GM12878 (cell line): ENCODE measurements at regions of chr3 and their contacts with region 1.

Region 1: GRCh38 chr3:53195602-53196574 is 34.9 kb downstream of the PRKCD start:
- DNase-seq: no peak
- ATAC-seq: peak; percentile 77
- H3K4me3 ChIP-seq: no peak overlapping the region; the same call in 1 of the 2 replicates
- H3K27ac ChIP-seq: peak overlapping the region; percentile 85
- H3K4me1 ChIP-seq: peaks cover 43% of the 10 kb centered on the region
- H3K27me3 ChIP-seq: no peaks in the 10 kb centered on the region
- CTCF ChIP-seq: peak; percentile 98 to 99 (median 99); a peak in 5 of 6 replicates
- EP300 ChIP-seq: no peak
- POLR2A ChIP-seq: no peak; the same call in 1 of the 2 replicates
- RAD21 ChIP-seq: peak; percentile 95

Region 2: DNA sequence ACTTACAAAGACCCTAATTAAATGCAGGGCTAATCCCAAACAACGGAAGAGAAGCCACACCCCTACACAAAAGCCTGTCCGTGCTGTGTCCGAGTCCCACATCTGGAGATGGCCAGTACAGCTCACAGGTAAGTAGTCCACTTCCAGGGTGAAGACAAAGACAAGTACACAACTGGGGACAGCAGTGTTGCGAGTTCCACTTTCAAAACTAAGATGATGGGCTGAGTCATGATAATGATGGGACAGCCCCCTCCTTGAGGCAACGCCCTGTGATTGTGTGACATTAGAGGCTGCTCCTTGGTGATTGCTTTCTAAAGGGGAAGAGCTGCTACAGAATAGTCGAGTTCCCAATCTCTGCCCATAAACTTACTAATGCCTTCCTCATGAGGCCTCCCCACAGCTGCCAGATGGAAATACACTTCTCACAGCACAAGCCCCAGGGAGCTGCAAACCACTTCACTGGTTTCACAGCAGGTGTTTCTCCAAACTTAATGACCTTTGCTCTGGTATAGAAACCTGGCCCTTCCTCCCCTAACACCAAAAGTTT is 93.2 kb before region 1 on chr3:
- CTCF ChIA-PET with region 1: interaction called, 303 read pairs
- POLR2A ChIA-PET with region 1: no interaction called
- RAD21 ChIA-PET with region 1: interaction called, 8 read pairs
- SMC1A ChIA-PET with region 1: interaction called, 13 read pairs
- in situ Hi-C with region 1: no loop called
- intact Hi-C with region 1: no loop called
- DNase-seq: peak; percentile 27
- ATAC-seq: peak; percentile 97
- H3K4me3 ChIP-seq: no peak overlapping the region
- H3K27ac ChIP-seq: peak overlapping the region; percentile 50; the same call in 1 of the 2 replicates
- H3K4me1 ChIP-seq: peaks cover 12% of the 10 kb centered on the region
- H3K27me3 ChIP-seq: no peaks in the 10 kb centered on the region
- CTCF ChIP-seq: no peak
- EP300 ChIP-seq: peak in 1 of 2 experiments; percentile 42; a peak in 1 of 4 replicates
- POLR2A ChIP-seq: peak; percentile 55
- RAD21 ChIP-seq: no peak

Region 3: DNA sequence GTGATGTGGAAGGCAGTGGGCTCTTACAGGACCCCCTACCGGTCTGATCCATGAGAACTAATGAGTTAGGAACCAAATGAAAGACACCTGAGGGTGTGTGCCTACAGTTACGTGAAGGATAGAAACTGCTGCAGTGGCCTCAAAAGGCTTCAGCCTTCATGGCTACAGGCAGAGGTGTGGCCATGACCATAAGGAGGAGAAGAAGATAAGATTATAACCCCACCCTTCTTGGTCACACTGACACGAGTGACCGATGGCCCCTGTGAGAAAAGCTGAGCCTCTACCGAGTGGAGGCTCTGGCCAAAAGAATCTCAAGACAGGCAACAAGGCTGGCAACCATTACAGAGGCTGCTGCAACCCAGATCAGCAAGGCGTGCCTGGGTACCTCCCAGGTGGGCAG is 71.9 kb before region 1 on chr3:
- CTCF ChIA-PET with region 1: interaction called, 476 read pairs
- POLR2A ChIA-PET with region 1: interaction called, 9 read pairs
- RAD21 ChIA-PET with region 1: interaction called, 89 read pairs
- SMC1A ChIA-PET with region 1: interaction called, 227 read pairs
- in situ Hi-C with region 1: no loop called
- intact Hi-C with region 1: no loop called
- DNase-seq: no peak
- ATAC-seq: no peak
- H3K4me3 ChIP-seq: no peak overlapping the region
- H3K27ac ChIP-seq: no peak overlapping the region
- H3K4me1 ChIP-seq: 0 out of 2 replicates have a peak, but pooled peaks cover 2% of the 10 kb centered on the region
- H3K27me3 ChIP-seq: no peaks in the 10 kb centered on the region
- CTCF ChIP-seq: no peak
- EP300 ChIP-seq: no peak
- POLR2A ChIP-seq: no peak
- RAD21 ChIP-seq: no peak

Region 4: DNA sequence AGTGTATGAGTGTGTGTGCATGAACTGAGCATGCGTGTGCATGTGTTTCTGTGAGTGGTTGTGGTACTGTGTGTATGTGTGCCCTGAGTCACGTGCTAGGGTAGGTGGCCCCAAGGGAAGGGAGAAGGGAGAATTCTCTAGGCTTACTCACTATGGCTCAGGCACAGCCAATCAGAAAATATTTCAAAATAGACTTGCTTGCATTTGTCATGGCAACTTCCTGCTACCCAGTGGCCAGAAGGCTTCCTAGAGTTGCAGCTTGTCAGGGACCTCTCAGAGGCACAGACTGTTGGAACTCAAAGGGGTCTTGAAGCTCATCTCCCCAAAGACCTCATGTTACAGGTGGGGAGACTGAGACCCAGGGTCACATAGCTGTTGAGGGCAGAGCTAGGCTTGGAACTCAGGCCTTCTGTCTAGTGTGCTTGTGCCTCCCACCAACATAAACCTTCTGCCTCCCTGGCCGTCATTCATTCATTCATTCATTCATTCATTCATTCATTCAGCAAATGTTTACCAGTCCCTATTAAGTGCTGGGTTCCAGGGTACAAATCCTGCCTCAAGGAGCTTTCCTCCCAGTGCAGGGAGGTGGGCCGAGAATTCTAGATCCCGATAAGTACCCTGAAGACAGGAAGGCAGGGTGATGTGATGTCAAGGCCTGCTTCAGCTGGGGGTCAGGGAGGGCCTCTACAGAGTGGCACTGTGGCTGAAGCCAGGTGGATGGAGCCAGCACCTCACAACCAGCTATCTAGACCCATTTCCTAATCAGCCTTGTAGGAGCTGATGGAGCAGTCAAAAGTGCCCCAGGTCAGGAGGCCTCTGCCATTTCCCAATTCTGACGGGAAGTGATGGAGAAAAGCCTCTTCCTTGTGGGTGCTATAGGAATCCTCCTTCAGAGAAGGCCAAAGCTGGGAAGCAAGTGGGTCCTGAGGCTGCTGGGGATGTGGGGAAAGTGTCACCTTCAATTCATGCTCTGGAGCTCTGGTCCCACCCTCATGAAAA is 54.7 kb before region 1 on chr3:
- CTCF ChIA-PET with region 1: interaction called, 476 read pairs
- POLR2A ChIA-PET with region 1: interaction called, 4 read pairs
- RAD21 ChIA-PET with region 1: interaction called, 151 read pairs
- SMC1A ChIA-PET with region 1: interaction called, 227 read pairs
- in situ Hi-C with region 1: no loop called
- intact Hi-C with region 1: no loop called
- DNase-seq: no peak
- ATAC-seq: peak; percentile 43
- H3K4me3 ChIP-seq: no peak overlapping the region
- H3K27ac ChIP-seq: no peak overlapping the region
- H3K4me1 ChIP-seq: peaks cover 13% of the 10 kb centered on the region
- H3K27me3 ChIP-seq: no peaks in the 10 kb centered on the region
- CTCF ChIP-seq: no peak
- EP300 ChIP-seq: no peak
- POLR2A ChIP-seq: no peak
- RAD21 ChIP-seq: no peak

Region 5: DNA sequence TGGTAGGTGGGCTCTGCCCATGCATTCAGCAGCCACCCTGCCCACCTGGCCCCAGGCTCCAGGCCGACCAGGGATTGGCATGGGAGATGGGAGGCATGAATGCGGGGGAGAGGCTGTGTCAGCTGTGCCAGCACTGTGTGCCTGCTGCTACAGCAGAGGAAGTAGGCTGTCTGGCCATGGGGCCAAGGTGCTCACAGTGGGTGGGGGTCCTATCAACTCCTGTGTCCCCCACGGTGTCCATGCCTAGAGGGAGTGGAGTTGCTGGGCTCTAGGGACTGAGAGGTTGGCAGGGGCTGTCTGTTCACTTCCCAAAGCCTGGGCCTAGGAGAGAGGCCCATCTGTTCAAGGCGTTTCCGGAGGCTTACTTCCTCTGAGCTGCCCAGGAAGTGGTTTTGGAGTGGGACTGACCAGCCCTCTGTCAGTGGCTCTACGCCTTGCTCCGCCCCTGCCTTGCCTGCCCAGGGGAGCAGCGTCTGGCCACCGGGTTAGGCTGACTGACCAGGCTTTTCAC is 29.1 kb before region 1 on chr3:
- CTCF ChIA-PET with region 1: interaction called, 125 read pairs
- POLR2A ChIA-PET with region 1: interaction called, 4 read pairs
- RAD21 ChIA-PET with region 1: interaction called, 44 read pairs
- SMC1A ChIA-PET with region 1: interaction called, 30 read pairs
- in situ Hi-C with region 1: no loop called
- intact Hi-C with region 1: loop called (anchors 2 kb)
- DNase-seq: no peak
- ATAC-seq: peak; percentile 19
- H3K4me3 ChIP-seq: peak overlapping the region; percentile 68
- H3K27ac ChIP-seq: peak overlapping the region; percentile 81
- H3K4me1 ChIP-seq: peaks cover 84% of the 10 kb centered on the region
- H3K27me3 ChIP-seq: no peaks in the 10 kb centered on the region
- CTCF ChIP-seq: no peak
- EP300 ChIP-seq: no peak
- POLR2A ChIP-seq: peak; percentile 11; the same call in 1 of the 2 replicates
- RAD21 ChIP-seq: no peak

Region 6: DNA sequence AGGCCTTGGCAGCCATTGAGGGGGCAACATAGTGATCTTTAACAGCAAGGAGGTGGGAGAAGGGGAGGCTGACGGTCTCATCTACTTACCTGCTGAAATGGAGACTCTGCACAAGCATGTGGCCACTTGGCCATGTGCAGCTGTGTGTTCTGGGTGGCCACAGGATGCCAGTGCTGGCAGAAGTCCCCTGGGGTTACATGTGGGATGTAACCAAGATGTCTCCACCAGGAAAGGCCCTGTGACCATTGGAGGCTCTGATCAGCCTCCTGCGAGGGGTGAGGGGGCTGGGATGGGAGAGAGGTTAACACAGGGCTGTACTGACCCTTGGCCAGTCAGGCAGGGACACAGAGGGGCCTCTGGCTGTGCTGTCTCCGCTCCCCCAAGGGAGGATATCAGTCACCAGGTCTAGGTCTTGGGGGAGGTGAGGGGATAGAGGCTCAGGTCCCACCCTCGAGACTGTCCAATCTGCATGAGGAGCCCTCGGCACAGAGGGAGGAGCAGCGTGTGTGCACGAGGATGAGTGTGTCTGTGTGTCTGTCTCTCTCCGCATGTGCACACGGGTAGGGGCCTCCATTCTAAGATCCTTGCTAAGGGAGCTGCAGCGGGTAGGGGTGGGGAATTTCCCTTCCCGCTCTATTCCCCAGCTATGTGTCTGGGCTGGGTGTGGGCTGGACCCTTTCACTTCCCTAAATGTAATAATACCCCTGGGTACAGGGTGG is 15.4 kb before region 1 on chr3:
- CTCF ChIA-PET with region 1: interaction called, 23 read pairs
- POLR2A ChIA-PET with region 1: interaction called, 6 read pairs
- RAD21 ChIA-PET with region 1: interaction called, 27 read pairs
- SMC1A ChIA-PET with region 1: interaction called, 7 read pairs
- in situ Hi-C with region 1: no loop called
- intact Hi-C with region 1: no loop called
- DNase-seq: peak; percentile 84
- ATAC-seq: peak; percentile 97
- H3K4me3 ChIP-seq: peak overlapping the region; percentile 19; the same call in 1 of the 2 replicates
- H3K27ac ChIP-seq: peak overlapping the region; percentile 93
- H3K4me1 ChIP-seq: peaks cover 47% of the 10 kb centered on the region
- H3K27me3 ChIP-seq: no peaks in the 10 kb centered on the region
- CTCF ChIP-seq: no peak
- EP300 ChIP-seq: peak; percentile 56 to 88; a peak in 2 of 4 replicates
- POLR2A ChIP-seq: peak; percentile 63
- RAD21 ChIP-seq: no peak

Region 7: GRCh38 chr3:53650424-53650823 is 454.5 kb after region 1 on chr3:
- CTCF ChIA-PET with region 1: no interaction called
- POLR2A ChIA-PET with region 1: no interaction called
- RAD21 ChIA-PET with region 1: no interaction called
- SMC1A ChIA-PET with region 1: no interaction called
- in situ Hi-C with region 1: no loop called
- intact Hi-C with region 1: no loop called
- DNase-seq: peak; percentile 75
- ATAC-seq: peak; percentile 83
- H3K4me3 ChIP-seq: no peak overlapping the region; the same call in 1 of the 2 replicates
- H3K27ac ChIP-seq: no peak overlapping the region
- H3K4me1 ChIP-seq: peaks cover 12% of the 10 kb centered on the region
- H3K27me3 ChIP-seq: no peaks in the 10 kb centered on the region
- CTCF ChIP-seq: no peak
- EP300 ChIP-seq: peak; percentile 50 to 77; a peak in 3 of 4 replicates
- POLR2A ChIP-seq: no peak
- RAD21 ChIP-seq: no peak